Colonic mucosa (tissue), 4 donors: ENCODE measurements at regions of chr12 and their contacts with region 1.

Region 1: GRCh38 chr12:69639400-69640016 is 28.8 kb upstream of the LRRC10 start:
- DNase-seq: peak; percentile 66
- H3K4me3 ChIP-seq: no peak overlapping the region
- H3K27ac ChIP-seq: no peak overlapping the region
- H3K4me1 ChIP-seq: no peaks in the 10 kb centered on the region
- H3K27me3 ChIP-seq: no peaks in the 10 kb centered on the region
- CTCF ChIP-seq: peak; percentile 83

Region 2: DNA sequence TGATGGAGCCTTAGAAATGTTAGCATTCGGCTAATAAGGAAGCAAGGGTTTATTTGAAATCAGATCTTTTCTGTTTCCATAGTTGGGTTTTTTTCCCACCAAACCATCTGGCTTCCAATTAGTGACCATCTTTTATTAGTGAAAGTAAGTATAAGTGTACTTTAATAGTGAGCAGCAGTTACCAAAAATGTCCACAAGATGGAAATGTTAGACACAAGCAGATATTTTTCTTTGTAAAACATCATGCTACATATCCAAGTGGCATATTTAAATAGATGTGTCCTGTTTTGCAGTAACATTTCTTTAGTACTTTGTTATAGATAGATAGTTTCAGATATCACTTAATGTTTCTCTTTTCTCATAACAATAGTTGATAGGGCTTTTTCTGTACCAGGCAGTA is 251.1 kb before region 1 on chr12:
- intact Hi-C with region 1: loop called (anchors 10 kb)
- DNase-seq: no peak
- H3K4me3 ChIP-seq: no peak overlapping the region
- H3K27ac ChIP-seq: no peak overlapping the region
- H3K4me1 ChIP-seq: no peaks in the 10 kb centered on the region
- H3K27me3 ChIP-seq: no peaks in the 10 kb centered on the region
- CTCF ChIP-seq: peak; percentile 41

Region 3: GRCh38 chr12:69527506-69528272 is 111.8 kb before region 1 on chr12:
- intact Hi-C with region 1: no loop called
- DNase-seq: no peak
- H3K4me3 ChIP-seq: no peak overlapping the region
- H3K27ac ChIP-seq: no peak overlapping the region
- H3K4me1 ChIP-seq: no peaks in the 10 kb centered on the region
- H3K27me3 ChIP-seq: no peaks in the 10 kb centered on the region
- CTCF ChIP-seq: no peak

Region 4: DNA sequence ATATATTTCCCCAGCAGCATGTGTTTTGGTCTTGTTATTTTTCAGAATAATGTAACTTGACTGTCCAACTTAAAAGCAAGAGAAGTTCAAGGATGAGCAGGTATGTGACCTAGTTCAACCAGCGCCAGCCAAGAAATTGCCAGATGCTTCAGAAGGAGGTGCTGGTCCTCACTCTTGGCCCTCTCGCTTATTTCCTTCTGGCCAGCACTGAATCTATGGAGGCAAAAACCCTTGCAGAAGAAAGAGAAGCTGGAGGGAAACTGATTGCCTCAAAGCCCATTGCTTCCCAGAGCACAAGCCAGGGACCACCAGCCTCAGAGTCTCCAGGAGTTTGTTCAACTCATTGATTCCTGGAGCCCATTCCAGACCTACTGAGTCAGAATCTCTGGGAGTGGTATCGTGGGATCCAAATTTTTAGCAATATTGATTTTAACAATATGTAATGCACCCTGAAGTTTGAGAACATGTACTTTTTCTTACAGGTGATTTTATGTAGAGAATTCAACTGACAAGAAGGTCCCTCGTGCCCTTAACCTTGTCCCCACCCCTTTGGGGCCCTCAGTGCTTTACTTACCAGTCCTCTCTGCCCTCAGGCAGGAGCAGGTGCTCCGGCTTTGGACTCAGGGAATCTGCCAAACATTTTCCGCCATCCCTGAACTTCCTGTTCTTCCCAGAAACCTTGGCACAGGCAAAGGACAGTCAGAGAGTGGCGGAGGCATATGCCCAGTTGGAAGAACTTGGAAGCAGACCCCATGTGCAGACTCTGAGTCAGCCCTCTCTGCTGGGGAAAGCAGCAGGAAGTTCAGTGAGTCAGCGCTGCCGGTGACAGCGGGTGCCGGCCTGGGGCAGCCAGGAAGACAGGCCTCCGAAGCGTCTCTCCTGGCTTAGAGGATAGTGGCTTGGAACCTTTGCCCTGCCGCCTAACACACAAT is 49.3 kb after region 1 on chr12:
- intact Hi-C with region 1: no loop called
- DNase-seq: peak; percentile 29
- H3K4me3 ChIP-seq: no peak overlapping the region
- H3K27ac ChIP-seq: no peak overlapping the region
- H3K4me1 ChIP-seq: no peaks in the 10 kb centered on the region
- H3K27me3 ChIP-seq: no peaks in the 10 kb centered on the region
- CTCF ChIP-seq: no peak